KBM-7 (cell line): ENCODE measurements at regions of chr5 and their contacts with region 1.

Region 1: DNA sequence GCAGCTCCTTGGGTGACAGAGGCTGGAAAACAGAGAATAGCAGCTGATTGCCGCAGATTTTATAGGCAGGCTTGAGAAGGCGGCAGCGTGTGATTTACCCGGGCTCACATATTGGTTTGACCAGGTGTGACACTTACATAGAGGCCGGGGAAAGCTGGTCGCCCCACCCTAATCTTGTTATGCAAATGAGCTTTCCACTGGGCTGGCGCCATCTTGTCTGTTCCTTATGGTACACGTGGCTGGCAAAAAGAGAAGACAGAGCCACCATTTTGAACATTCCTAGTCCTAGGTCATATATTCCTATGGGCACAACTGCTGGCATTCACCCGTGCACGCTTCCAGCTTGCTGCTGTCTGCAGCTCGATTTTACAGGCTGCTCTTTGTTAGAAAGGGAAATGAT is 11.3 kb upstream of the SPZ1 start:
- DNase-seq: no peak

Region 2: DNA sequence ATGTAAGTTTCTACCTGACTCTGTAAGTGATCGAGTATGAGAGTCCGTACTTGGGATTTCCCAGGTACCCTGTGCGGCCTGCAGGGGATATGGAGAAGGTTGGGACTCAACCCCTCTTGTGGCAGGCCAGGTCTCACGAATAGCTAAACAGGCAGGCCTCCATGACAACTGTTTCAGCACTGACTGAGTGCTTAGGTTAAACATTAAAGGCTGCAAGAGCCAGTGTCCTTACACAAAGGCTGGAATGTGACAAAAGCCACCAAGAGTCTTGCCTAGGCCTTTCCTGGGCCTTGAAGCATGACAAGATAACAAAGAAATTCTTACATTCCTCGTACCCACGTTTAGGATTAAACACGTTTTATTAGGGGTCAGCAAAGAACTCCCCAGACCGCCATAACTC is 214.7 kb before region 1 on chr5:
- in situ Hi-C with region 1: loop called (anchors 10 kb)
- DNase-seq: no peak

Region 3: GRCh38 chr5:80659106-80659505 is 350.6 kb after region 1 on chr5:
- in situ Hi-C with region 1: no loop called
- DNase-seq: no peak